Dorsolateral prefrontal cortex (tissue), 120 donors: ENCODE measurements at regions of chr12 and their contacts with region 1.

Region 1: GRCh38 chr12:122051231-122051876 is 27.2 kb upstream of the MLXIP start:
- DNase-seq: peak in 1 of 10 donors; percentile 23
- H3K4me3 ChIP-seq: peak overlapping the region in 1 of 59 donors; percentile 4
- H3K27ac ChIP-seq: peak overlapping the region in 55 of 59 donors; percentile 21 to 89 (median 72)
- H3K27me3 ChIP-seq: no peaks in the 10 kb centered on the region
- CTCF ChIP-seq: no peak

Region 2: GRCh38 chr12:121888478-121889266 is 162.7 kb before region 1 on chr12 and contains the start of gene PSMD9:
- intact Hi-C with region 1: no loop called
- DNase-seq: peak; percentile 93 to 98 (median 96)
- H3K4me3 ChIP-seq: peak within 1 kb of the TSS; percentile 67 to 100 (median 91)
- H3K27ac ChIP-seq: peak within 1 kb of the TSS; percentile 73 to 99 (median 91)
- H3K27me3 ChIP-seq: no peaks in the 10 kb centered on the region
- CTCF ChIP-seq: peak; percentile 18 to 71 (median 52)
- total RNA-seq, gene PSMD9: 20.7 to 47.0 (median 32.4) TPM

Region 3: DNA sequence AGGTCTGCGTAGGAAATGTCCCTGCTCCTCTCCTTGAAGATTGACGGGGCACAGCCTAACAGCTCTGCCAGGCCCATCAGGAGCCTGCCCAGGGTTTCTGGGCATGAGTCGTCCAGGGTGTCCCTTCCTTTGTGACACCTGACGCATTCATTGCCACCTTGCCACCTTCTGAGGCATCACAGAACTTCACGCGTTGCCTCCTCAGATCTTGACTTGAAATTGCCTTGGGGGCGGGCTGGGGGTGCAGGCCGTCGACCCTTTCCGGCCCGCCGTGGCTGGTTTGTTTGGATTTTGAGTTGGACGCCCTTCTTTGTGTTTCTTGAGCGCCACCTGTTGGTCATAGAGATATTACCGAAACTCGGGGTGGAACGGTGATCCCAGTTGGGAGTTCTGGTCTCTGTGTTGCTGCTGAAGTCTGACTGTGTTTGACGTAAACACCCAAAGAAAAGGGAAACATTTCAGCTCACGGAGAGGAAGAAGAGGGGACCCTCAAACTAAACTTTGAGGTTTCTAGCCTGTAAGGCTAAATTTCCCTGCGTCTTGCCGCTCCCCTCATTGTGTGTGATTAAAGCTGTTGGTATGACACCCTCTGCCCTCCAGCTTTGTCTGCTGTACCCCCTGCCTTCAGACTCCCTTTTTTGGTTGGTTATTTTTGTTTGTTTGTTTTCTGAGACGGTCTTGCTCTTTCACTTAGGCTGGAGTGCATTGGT is 71.9 kb after region 1 on chr12:
- intact Hi-C with region 1: loop called (anchors 1 kb)
- DNase-seq: peak in 7 of 10 donors; percentile 49 to 77 (median 74)
- H3K4me3 ChIP-seq: peak overlapping the region in 14 of 59 donors; percentile 1 to 39 (median 24)
- H3K27ac ChIP-seq: peak overlapping the region in 4 of 59 donors; percentile 6 to 59 (median 22)
- H3K27me3 ChIP-seq: no peaks in the 10 kb centered on the region
- CTCF ChIP-seq: peak; percentile 63 to 95 (median 82)

Region 4: GRCh38 chr12:122356192-122356635 is 304.9 kb after region 1 on chr12:
- intact Hi-C with region 1: loop called in 1 of 2 experiments (anchors 10 kb)
- DNase-seq: peak in 4 of 10 donors; percentile 23 to 75 (median 44)
- H3K4me3 ChIP-seq: no peak overlapping the region
- H3K27ac ChIP-seq: peak overlapping the region in 37 of 59 donors; percentile 11 to 85 (median 61)
- H3K27me3 ChIP-seq: no peaks in the 10 kb centered on the region
- CTCF ChIP-seq: peak; percentile 64 to 90 (median 81)